Activated T-helper 1 cell treated with anti-CD3 and anti-CD28 coated beads, Interleukin-12 subunit alpha, Interleukin-12 subunit beta, Interleukin-2, Interleukin-4 antibody, amounts not matched to agents 30 ng/mL and 10 ng/mL and 1 ng/mL, durations not matched to agents 14 hours and 24 hours and 36 hours (primary cell): ENCODE measurements at regions of chr10 and their contacts with region 1.

Region 1: GRCh38 chr10:22340362-22341189 is 4.7 kb upstream of the SPAG6 start:
- DNase-seq: peak; percentile 67
- H3K4me3 Mint-ChIP-seq: peak overlapping the region; percentile 86
- H3K27ac Mint-ChIP-seq: peak overlapping the region; percentile 96
- H3K4me1 Mint-ChIP-seq: peaks cover 47% of the 10 kb centered on the region
- H3K27me3 Mint-ChIP-seq: peaks cover 76% of the 10 kb centered on the region

Region 2: DNA sequence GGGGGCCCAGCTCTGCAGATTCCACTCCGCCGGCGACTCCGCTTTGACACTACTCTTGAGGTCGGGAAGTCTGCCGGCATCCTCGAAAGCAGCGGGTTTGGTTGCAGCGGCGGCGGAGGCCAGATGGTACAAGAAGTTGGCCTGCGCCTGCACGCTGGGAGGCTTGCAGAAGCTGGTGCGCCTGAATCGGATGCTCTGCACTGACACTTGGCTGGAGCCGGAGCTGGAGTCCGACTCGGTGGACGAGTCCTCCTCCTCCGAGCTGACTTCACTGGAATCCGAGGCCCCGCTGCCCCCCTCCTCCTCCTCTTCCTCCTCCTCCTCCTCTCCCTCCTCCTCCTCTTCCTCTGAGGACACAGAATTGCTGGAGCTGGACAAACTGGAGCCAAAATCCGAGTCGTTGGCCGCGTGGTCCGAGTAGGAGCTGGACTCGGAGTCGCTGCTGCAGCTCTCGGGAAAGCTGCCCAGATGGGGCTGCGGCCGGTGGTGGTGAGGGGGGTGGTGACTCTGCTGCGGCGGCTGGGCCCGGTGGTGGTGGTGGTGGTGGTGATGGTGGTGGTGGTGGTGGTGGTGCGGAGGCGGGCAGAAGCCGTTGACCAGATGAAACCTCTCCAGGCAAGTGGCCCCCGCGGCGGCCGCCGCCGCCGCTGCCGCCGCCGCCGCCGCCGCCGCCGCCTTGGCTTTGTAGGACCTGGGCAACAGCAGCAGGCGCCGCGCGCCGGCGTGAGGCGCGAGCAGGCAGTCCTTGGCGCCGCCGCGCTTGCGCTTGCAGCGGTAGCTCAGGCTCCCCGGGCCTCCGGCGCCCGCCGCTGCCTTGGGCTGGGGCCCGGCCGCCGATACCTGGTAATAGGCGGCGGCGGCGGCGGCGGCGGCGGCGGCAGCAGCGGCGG is 824.1 kb before region 1 on chr10:
- intact Hi-C with region 1: loop called (anchors 2 kb)
- DNase-seq: peak; percentile 45
- H3K4me3 Mint-ChIP-seq: peak overlapping the region; percentile 79
- H3K27ac Mint-ChIP-seq: no peak overlapping the region
- H3K4me1 Mint-ChIP-seq: peaks cover 47% of the 10 kb centered on the region
- H3K27me3 Mint-ChIP-seq: peaks cover 79% of the 10 kb centered on the region

Region 3: DNA sequence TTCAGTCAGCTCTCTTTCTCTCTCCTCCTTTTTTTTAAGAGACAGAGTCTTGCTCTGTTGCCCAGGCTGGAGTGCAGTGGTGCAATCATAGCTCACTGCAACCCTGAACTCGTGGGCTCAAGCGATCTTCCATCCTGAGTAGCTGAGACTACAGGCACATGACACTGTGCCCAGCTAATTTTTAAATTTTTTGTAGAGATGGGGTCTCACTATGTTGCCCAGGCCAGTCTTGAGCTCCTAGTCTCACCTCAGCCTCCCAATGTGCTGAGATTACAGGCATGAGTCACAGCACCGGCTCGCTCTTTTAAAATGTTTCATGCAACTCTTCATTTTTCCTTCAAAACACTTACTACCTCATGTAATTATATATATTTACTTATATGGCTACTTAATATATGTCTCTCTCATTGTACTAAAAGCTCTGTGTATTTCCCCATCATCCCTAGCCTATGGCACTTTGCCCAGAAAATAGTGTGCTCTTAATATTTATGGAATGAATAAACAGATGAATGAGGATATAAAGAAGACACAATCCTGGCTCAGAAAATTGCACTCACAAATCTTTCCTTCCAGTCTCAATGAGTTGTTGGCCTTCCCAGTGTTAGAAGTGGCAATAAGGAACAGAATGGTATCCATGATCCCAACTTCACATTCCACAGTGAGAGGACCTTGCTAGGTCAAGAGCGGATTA is 156.7 kb before region 1 on chr10:
- intact Hi-C with region 1: no loop called
- DNase-seq: no peak
- H3K4me3 Mint-ChIP-seq: no peak overlapping the region
- H3K27ac Mint-ChIP-seq: no peak overlapping the region
- H3K4me1 Mint-ChIP-seq: no peaks in the 10 kb centered on the region
- H3K27me3 Mint-ChIP-seq: peaks cover 24% of the 10 kb centered on the region

Region 4: GRCh38 chr10:22251751-22252223 is 88.8 kb before region 1 on chr10:
- intact Hi-C with region 1: loop called (anchors 1 kb)
- DNase-seq: peak; percentile 58
- H3K4me3 Mint-ChIP-seq: peak overlapping the region; percentile 88
- H3K27ac Mint-ChIP-seq: peak overlapping the region; percentile 98
- H3K4me1 Mint-ChIP-seq: peaks cover 44% of the 10 kb centered on the region
- H3K27me3 Mint-ChIP-seq: peaks cover 18% of the 10 kb centered on the region

Region 5: GRCh38 chr10:22379059-22379458 is 38.5 kb after region 1 on chr10:
- intact Hi-C with region 1: loop called (anchors 2 kb)
- DNase-seq: peak; percentile 7
- H3K4me3 Mint-ChIP-seq: peak overlapping the region; percentile 27
- H3K27ac Mint-ChIP-seq: peak overlapping the region; percentile 81
- H3K4me1 Mint-ChIP-seq: peaks cover 30% of the 10 kb centered on the region
- H3K27me3 Mint-ChIP-seq: peaks cover 3% of the 10 kb centered on the region

Region 6: GRCh38 chr10:22988581-22989360 is 648.2 kb after region 1 on chr10:
- intact Hi-C with region 1: loop called (anchors 2 kb)
- DNase-seq: peak; percentile 57
- H3K4me3 Mint-ChIP-seq: no peak overlapping the region
- H3K27ac Mint-ChIP-seq: no peak overlapping the region
- H3K4me1 Mint-ChIP-seq: peaks cover 22% of the 10 kb centered on the region
- H3K27me3 Mint-ChIP-seq: peaks cover 9% of the 10 kb centered on the region